Astrocyte of the cerebellum (primary cell): ENCODE measurements at regions of chr5 and their contacts with region 1.

Region 1: DNA sequence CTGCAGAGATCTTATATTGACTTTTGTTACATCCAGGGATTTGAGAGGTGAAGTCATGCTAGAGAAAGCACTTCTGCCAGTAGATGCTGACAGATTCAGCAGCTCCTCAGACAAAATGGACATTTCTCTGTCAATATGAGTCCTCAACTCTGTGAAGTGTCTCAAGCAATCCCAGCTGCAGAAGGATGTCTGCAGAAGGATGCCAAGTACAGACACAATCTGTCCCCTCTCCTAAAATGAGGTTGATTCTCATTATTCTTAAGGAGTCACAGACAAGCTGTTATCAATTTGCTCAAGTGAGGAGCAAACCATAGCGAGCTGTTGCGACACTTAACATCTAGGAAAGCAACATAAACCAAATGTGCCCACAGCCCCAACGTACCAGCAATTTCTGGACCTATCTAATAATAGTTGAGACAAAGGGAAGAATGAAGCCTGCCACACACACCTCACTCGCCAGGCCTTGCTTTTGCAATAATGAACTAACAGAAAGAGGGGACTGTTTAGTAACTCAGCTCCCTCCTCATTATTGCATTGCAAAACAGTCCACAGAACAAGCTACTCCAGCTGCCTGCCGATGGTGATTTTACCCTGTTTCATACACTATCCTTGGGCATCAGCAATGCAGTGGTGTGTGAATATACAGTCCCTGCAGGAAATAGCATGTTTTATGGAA is 364.2 kb upstream of the PDE4D start:
- DNase-seq: no peak
- H3K4me3 ChIP-seq: no peak overlapping the region
- CTCF ChIP-seq: no peak

Region 2: GRCh38 chr5:60210810-60211209 is 46.9 kb before region 1 on chr5:
- in situ Hi-C with region 1: loop called (anchors 5 kb)
- DNase-seq: no peak
- H3K4me3 ChIP-seq: peak overlapping the region; percentile 6
- CTCF ChIP-seq: no peak

Region 3: GRCh38 chr5:60295423-60295822 is 37.7 kb after region 1 on chr5:
- in situ Hi-C with region 1: no loop called
- DNase-seq: peak; percentile 3
- H3K4me3 ChIP-seq: no peak overlapping the region
- CTCF ChIP-seq: peak; percentile 65

Region 4: DNA sequence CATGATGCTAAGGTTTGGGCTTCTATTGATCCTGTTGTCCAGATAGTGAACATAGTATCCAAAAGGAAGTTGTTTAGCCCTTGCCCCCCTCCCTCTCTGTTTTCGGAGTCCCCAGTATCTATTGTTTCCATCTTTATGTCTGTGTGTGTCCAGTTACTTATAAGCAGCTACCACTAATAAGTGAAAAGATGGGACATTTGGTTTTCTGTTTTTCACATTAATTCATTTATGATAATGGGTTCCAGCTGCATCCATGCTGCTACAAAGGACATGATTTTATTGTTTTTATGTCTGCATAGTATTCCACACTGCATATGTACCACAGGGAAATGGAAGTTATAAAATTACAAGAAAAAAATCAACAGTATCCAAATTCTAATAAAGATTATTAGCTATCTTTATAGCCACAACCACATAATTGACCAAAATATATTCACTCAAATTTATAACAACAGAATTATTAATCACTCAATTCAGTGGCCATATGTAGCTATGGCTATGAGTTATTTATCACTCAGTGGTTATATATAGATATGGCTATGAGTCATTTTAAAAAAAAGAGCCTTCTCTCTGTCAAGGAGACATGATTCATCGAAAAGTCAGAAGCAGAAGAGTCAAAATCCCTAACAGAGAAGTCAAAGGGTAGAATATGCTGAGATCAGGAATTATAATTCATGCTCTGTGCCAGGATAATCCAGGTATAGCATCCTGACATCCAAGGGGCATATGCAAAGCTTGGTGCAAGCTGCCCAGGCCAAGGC is 74.7 kb after region 1 on chr5:
- in situ Hi-C with region 1: no loop called
- DNase-seq: no peak
- H3K4me3 ChIP-seq: no peak overlapping the region
- CTCF ChIP-seq: no peak